ENCODE measurements at regions of chr1 and their contacts with region 1.

Region 1: DNA sequence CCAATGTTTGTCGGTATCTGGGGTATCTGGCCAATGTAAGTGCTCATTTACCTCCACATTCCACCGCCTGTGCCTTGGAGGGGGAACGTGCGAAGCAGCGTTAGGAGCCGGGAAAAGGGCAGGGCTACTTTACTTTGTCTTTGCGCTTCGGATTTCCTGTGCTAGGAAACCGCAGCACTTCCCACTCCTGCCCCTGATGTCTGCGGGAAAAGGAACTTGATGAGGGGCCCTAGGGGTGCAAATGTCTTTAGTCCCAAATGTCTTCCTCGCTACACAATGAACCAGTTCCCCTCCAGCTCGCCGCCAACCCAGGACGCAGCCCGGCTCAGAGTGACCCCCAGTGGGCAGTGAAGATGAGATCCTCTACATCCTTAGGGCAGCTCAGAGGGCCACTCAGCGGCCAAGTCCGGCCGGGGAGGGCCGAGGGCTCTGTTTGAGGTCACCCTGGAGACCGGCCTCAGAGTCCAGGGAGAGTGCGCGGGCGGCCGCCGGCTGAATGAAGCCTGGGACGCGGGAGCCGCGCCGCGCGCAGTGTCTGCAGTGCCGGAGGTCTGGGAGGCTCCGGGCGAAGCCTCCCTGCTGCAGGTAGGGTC is at the start of gene DYNLT5:
- DNase-seq: no peak
- H3K4me3 ChIP-seq: peak within 1 kb of the TSS; percentile 40
- H3K27me3 ChIP-seq: no peaks in the 10 kb centered on the region
- CTCF ChIP-seq: peak; percentile 40
- polyA plus RNA-seq, gene DYNLT5: 0.52 and 1.1 TPM in 2 replicates

Region 2: DNA sequence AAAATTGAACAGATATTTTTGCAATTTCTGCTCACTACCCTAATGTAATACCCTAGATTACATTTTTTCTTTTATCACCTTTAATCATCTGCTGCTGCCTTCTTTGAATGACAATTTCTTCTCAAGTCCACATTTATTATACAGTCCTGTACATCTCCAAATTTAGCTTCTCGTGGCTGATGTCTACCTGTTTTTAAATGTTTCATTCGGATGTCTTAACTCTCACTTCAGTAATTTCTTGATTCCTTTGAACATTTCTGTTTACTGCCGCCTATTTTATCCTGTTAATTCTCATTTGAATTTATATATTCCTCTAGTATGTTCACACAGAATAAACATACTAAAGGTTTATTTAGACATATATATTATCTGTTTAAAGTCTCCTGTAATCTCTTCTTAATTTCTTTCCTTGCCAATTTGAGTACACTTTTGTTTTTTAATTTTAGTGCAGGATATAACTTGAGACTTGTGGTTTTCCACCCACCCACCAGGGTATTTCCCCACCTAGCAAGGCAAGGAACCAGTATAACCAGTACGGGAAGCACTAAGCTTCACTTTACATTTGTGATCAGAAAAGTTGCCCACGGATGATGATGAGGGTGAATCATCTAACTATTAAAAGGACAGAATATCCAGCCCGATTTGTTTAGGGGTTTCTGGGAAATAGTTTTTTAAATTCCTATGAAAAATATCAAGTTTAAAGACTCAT is 36.3 kb after region 1 on chr1:
- CTCF ChIA-PET with region 1: no interaction called
- POLR2A ChIA-PET with region 1: interaction called, 23 read pairs
- DNase-seq: no peak
- H3K4me3 ChIP-seq: no peak overlapping the region
- H3K27me3 ChIP-seq: no peaks in the 10 kb centered on the region
- CTCF ChIP-seq: no peak